H1 (cell line): ENCODE measurements at regions of chr2 and their contacts with region 1.

Region 1: GRCh38 chr2:127810619-127811396 is at the start of gene WDR33:
- DNase-seq: peak; percentile 85 to 94
- H3K4me3 ChIP-seq: peak within 1 kb of the TSS; percentile 93 to 99 (median 96)
- H3K27ac ChIP-seq: peak within 1 kb of the TSS; percentile 98
- H3K4me1 ChIP-seq: peaks cover 0 to 9% (median 6%) of the 10 kb centered on the region in 4 experiments; a peak in 4 of 7 replicates
- H3K27me3 ChIP-seq: no peaks in the 10 kb centered on the region
- CTCF ChIP-seq: peak in 1 of 3 experiments; percentile 30; a peak in 1 of 4 replicates
- EP300 ChIP-seq: no peak
- POLR2A ChIP-seq: peak; percentile 71 to 88
- RAD21 ChIP-seq: peak in 1 of 2 experiments; percentile 27; a peak in 3 of 4 replicates
- total RNA-seq, gene WDR33: 82.7 and 84.6 TPM in 2 replicates

Region 2: DNA sequence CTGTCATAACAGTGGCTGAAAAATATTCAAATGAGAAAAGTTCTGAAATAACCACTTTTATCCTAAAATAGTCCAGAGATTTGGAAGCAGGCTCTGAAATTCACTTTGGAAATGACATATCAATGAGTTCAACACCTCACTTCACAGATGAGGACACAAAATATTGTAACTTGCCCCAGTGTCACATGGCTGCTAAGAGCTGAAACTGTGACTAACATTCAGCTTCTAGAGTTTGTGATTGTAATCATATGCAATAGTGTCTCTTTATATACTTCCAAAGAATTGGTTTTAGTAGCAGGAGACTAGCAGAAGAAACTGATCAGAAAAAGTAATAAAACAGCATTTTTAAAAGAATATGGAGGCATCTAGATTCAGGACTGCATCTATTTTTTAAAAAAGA is 57.4 kb before region 1 on chr2:
- CTCF ChIA-PET with region 1: no interaction called
- POLR2A ChIA-PET with region 1: no interaction called
- DNase-seq: no peak
- H3K4me3 ChIP-seq: no peak overlapping the region
- H3K27ac ChIP-seq: no peak overlapping the region
- H3K4me1 ChIP-seq: no peaks in the 10 kb centered on the region
- H3K27me3 ChIP-seq: no peaks in the 10 kb centered on the region
- CTCF ChIP-seq: no peak
- EP300 ChIP-seq: no peak
- POLR2A ChIP-seq: no peak
- RAD21 ChIP-seq: no peak

Region 3: GRCh38 chr2:127768775-127769479 is 41.9 kb before region 1 on chr2:
- CTCF ChIA-PET with region 1: no interaction called
- POLR2A ChIA-PET with region 1: no interaction called
- DNase-seq: no peak
- H3K4me3 ChIP-seq: no peak overlapping the region
- H3K27ac ChIP-seq: no peak overlapping the region
- H3K4me1 ChIP-seq: no peaks in the 10 kb centered on the region
- H3K27me3 ChIP-seq: no peaks in the 10 kb centered on the region
- CTCF ChIP-seq: no peak
- EP300 ChIP-seq: no peak
- POLR2A ChIP-seq: no peak
- RAD21 ChIP-seq: no peak

Region 4: DNA sequence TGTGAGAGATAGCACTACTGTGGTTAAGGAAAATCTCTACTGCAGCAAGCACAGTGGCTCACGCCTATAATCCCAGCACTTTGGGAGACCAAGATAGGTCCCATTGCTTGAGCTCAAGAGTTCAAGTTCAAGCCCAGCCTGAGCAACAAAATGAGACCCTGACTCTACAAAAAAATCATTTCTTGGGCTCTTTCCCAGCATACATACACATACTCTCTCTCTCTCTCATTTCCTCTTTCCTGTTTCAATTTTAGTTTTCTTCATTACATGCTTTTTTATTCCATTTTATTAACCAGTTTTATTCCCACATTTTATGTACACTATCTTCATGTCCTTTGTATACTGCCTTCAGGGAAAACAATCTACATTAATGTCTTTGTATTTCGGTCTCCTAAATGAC is 14.4 kb before region 1 on chr2:
- CTCF ChIA-PET with region 1: interaction called, 3 read pairs
- POLR2A ChIA-PET with region 1: interaction called, 14 read pairs
- DNase-seq: no peak
- H3K4me3 ChIP-seq: no peak overlapping the region
- H3K27ac ChIP-seq: no peak overlapping the region
- H3K4me1 ChIP-seq: no peaks in the 10 kb centered on the region
- H3K27me3 ChIP-seq: no peaks in the 10 kb centered on the region
- CTCF ChIP-seq: no peak
- EP300 ChIP-seq: no peak
- POLR2A ChIP-seq: no peak
- RAD21 ChIP-seq: no peak

Region 5: DNA sequence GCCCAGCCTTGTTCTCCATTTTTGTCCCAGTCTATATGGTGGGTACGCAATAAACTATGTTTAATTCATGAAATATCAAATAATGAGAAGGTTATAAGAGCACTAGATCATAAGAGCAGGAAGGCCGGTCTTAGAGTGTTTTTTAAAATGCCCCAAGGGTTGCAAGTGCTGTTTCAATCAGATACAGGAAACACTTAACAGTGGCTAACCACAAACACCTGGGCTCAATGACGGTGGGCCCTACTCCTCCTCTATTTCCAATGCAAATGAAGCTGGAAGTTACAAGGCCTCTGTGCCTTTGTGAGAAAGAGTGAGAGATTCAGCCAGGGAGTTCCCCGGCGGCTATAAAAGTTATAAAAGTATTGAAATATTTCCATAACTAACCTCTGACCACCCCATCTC is 19.0 kb after region 1 on chr2:
- CTCF ChIA-PET with region 1: interaction called, 3 read pairs
- POLR2A ChIA-PET with region 1: interaction called, 11 read pairs
- DNase-seq: peak in 1 of 2 experiments; percentile 27
- H3K4me3 ChIP-seq: no peak overlapping the region
- H3K27ac ChIP-seq: peak overlapping the region; percentile 19; the same call in 1 of the 2 replicates
- H3K4me1 ChIP-seq: peaks cover 0 to 6% (median 0%) of the 10 kb centered on the region in 4 experiments; a peak in 2 of 7 replicates
- H3K27me3 ChIP-seq: no peaks in the 10 kb centered on the region
- CTCF ChIP-seq: no peak
- EP300 ChIP-seq: no peak
- POLR2A ChIP-seq: peak in 1 of 2 experiments; percentile 29; a peak in 1 of 3 replicates
- RAD21 ChIP-seq: no peak